Caco-2 (cell line): ENCODE measurements at regions of chr13 and their contacts with region 1.

Region 1: GRCh38 chr13:51978796-51979556 is 32.3 kb downstream of the ATP7B start:
- DNase-seq: peak; percentile 79 to 86
- H3K4me3 ChIP-seq: no peak overlapping the region
- H3K4me3 Mint-ChIP-seq: peak overlapping the region; percentile 84
- H3K27ac Mint-ChIP-seq: peak overlapping the region; percentile 68
- H3K4me1 ChIP-seq: peaks cover 44% of the 10 kb centered on the region
- H3K4me1 Mint-ChIP-seq: peaks cover 36% of the 10 kb centered on the region
- H3K27me3 ChIP-seq: no peaks in the 10 kb centered on the region
- H3K27me3 Mint-ChIP-seq: no peaks in the 10 kb centered on the region
- CTCF ChIP-seq: no peak

Region 2: GRCh38 chr13:51663973-51664957 is 314.7 kb before region 1 on chr13:
- CTCF ChIA-PET with region 1: no interaction called
- POLR2A ChIA-PET with region 1: no interaction called
- intact Hi-C with region 1: no loop called
- DNase-seq: no peak
- H3K4me3 ChIP-seq: no peak overlapping the region
- H3K4me3 Mint-ChIP-seq: no peak overlapping the region
- H3K27ac Mint-ChIP-seq: no peak overlapping the region
- H3K4me1 ChIP-seq: 0 out of 2 replicates have a peak, but pooled peaks cover 9% of the 10 kb centered on the region
- H3K4me1 Mint-ChIP-seq: peaks cover 16% of the 10 kb centered on the region
- H3K27me3 ChIP-seq: no peaks in the 10 kb centered on the region
- H3K27me3 Mint-ChIP-seq: no peaks in the 10 kb centered on the region
- CTCF ChIP-seq: no peak

Region 3: GRCh38 chr13:51957377-51958216 is 21.4 kb before region 1 on chr13:
- CTCF ChIA-PET with region 1: interaction called, 4 read pairs
- POLR2A ChIA-PET with region 1: no interaction called
- intact Hi-C with region 1: loop called (anchors 1 kb)
- DNase-seq: no peak
- H3K4me3 ChIP-seq: no peak overlapping the region
- H3K4me3 Mint-ChIP-seq: no peak overlapping the region
- H3K27ac Mint-ChIP-seq: peak overlapping the region; percentile 60
- H3K4me1 ChIP-seq: peaks cover 13% of the 10 kb centered on the region
- H3K4me1 Mint-ChIP-seq: peaks cover 9% of the 10 kb centered on the region
- H3K27me3 ChIP-seq: no peaks in the 10 kb centered on the region
- H3K27me3 Mint-ChIP-seq: no peaks in the 10 kb centered on the region
- CTCF ChIP-seq: no peak

Region 4: GRCh38 chr13:52001120-52001731 is 22.2 kb after region 1 on chr13:
- CTCF ChIA-PET with region 1: interaction called, 4 read pairs
- POLR2A ChIA-PET with region 1: interaction called, 14 read pairs
- intact Hi-C with region 1: loop called (anchors 1 kb)
- DNase-seq: no peak
- H3K4me3 ChIP-seq: no peak overlapping the region
- H3K4me3 Mint-ChIP-seq: no peak overlapping the region
- H3K27ac Mint-ChIP-seq: no peak overlapping the region
- H3K4me1 ChIP-seq: peaks cover 66% of the 10 kb centered on the region
- H3K4me1 Mint-ChIP-seq: peaks cover 58% of the 10 kb centered on the region
- H3K27me3 ChIP-seq: no peaks in the 10 kb centered on the region
- H3K27me3 Mint-ChIP-seq: no peaks in the 10 kb centered on the region
- CTCF ChIP-seq: peak; percentile 61 to 82